PC-9 (cell line): ENCODE measurements at regions of chr17 and their contacts with region 1.

Region 1: DNA sequence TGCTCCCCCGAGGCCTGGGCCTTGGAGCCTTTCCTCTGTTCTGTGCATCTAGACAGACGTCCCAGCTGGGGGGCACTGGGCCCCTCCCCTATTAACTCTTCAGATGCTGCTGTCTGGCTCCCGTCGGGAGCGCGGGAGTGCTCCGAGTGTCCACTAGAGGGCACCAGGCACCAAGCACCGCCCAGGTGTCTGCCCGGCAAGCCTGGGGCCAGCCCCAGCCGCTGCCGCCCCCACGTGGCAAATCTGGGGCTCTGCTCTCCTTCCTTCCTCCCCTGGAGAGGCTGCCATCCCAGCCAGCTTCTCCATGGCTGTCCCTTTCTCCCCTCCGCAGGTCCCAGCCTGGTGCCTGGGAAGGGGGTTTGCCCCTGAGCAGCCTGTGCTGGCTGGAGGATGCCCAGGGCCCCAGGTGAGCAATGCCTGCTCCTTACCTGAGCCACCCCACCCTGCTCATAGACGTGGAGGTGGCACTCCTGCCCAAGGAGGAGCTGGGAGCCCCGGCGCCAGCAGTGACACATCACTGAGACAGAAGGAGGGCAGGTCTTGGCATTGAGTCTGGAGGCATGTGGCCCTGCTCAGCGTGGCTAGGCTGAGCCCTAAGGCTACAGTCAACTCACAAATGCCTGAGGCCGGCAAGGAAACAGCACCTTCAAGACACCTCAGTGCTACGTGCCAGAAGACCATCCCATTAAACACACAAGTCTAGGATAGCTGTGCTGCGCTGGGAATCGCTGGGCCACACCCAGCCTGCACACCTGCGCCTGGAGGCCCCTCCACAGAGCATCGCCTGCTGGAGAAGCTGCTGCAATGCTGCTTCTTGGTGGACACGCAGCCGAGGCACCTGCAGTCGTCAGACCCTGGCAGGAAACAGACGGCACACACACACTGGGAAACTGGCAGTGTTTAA is 19.7 kb downstream of the TMEM235 start:
- DNase-seq: peak; percentile 63 to 90
- H3K4me3 ChIP-seq: peak overlapping the region; percentile 23; the same call in 1 of the 2 replicates
- H3K27ac ChIP-seq: no peak overlapping the region
- H3K4me1 ChIP-seq: 0 out of 2 replicates have a peak, but pooled peaks cover 6% of the 10 kb centered on the region
- H3K27me3 ChIP-seq: no peaks in the 10 kb centered on the region
- CTCF ChIP-seq: peak; percentile 96

Region 2: DNA sequence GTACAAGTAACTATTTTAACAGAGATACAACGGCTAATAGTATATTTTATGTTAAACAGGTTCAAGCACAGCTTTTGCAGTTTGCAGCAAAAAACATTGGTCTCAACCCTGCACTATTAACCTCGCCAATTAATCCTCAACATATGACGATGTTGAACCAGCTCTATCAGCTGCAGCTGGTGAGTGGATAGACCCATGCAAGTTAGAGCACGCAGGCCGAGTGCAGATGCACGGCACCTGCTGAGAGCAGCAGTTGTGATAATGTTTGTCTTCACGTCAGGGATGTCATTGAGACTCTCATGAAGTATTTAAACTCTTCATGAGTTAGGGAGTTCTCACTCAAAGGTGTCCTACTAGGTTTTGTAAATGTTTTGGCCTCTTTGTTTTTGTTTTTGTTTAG is 168.2 kb before region 1 on chr17:
- CTCF ChIA-PET with region 1: interaction called, 15 read pairs
- POLR2A ChIA-PET with region 1: no interaction called
- intact Hi-C with region 1: loop called (anchors 1 kb)
- DNase-seq: no peak
- H3K4me3 ChIP-seq: no peak overlapping the region
- H3K27ac ChIP-seq: no peak overlapping the region
- H3K4me1 ChIP-seq: no peaks in the 10 kb centered on the region
- H3K27me3 ChIP-seq: peaks cover 10% of the 10 kb centered on the region
- CTCF ChIP-seq: no peak

Region 3: GRCh38 chr17:78095035-78095434 is 156.1 kb before region 1 on chr17:
- CTCF ChIA-PET with region 1: no interaction called
- POLR2A ChIA-PET with region 1: no interaction called
- intact Hi-C with region 1: no loop called
- DNase-seq: no peak
- H3K4me3 ChIP-seq: no peak overlapping the region
- H3K27ac ChIP-seq: no peak overlapping the region
- H3K4me1 ChIP-seq: no peaks in the 10 kb centered on the region
- H3K27me3 ChIP-seq: 0 out of 2 replicates have a peak, but pooled peaks cover 3% of the 10 kb centered on the region
- CTCF ChIP-seq: no peak

Region 4: GRCh38 chr17:78176548-78177025 is 74.6 kb before region 1 on chr17:
- CTCF ChIA-PET with region 1: interaction called, 17 read pairs
- POLR2A ChIA-PET with region 1: interaction called, 6 read pairs
- intact Hi-C with region 1: loop called (anchors 2 kb)
- DNase-seq: no peak
- H3K4me3 ChIP-seq: no peak overlapping the region
- H3K27ac ChIP-seq: no peak overlapping the region
- H3K4me1 ChIP-seq: 0 out of 2 replicates have a peak, but pooled peaks cover 4% of the 10 kb centered on the region
- H3K27me3 ChIP-seq: no peaks in the 10 kb centered on the region
- CTCF ChIP-seq: peak; percentile 50

Region 5: DNA sequence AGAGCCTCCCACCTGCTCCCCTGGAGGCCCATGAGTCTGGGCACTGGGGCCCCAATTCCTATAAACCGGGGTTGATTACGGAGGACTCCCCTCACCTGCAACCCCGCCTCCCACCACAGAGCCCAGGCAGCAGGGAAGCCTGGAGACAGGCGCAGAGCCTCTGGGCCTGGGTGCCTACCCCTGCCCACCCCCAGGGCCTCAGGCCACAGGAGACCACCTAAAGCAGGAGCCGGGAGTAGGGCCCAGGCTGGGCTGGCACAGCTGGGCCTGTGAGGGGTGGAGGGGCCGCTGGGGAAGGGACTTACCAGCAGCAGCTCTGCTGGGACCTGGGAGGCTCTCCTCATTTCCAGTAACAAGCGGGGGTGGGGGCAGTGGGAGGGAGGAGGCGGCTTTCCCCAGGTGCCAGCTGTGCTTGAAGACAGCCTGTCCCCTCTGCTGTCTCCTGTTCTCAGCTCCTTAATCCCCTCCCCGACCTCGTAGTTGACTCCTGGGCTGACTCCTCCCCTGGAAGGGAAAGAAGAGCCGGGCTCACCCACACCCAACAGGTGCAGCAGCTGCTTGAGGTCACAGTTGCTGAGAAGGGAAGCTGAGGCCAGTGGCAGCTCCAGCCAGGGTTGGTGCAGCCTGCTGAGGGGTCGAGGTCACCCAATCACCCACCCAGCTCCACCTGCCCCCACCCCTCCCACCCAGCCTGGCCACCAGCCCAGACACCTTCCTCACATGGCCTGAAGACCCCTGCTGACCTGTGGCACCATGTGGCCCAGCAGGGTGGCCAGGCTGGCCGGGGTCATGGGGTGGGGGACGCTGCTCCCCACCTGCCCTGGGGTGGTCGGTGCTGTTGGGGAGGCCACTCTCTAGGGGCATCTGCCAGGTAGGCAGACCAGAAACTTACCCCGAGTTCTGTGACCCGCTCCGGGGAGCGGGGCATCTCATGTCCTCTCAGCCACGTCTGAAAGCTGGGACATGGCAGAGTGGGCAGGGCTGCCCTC is 27.3 kb after region 1 on chr17:
- CTCF ChIA-PET with region 1: interaction called, 10 read pairs
- POLR2A ChIA-PET with region 1: no interaction called
- intact Hi-C with region 1: no loop called
- DNase-seq: no peak
- H3K4me3 ChIP-seq: no peak overlapping the region
- H3K27ac ChIP-seq: no peak overlapping the region
- H3K4me1 ChIP-seq: no peaks in the 10 kb centered on the region
- H3K27me3 ChIP-seq: no peaks in the 10 kb centered on the region
- CTCF ChIP-seq: no peak

Region 6: GRCh38 chr17:78360371-78361224 is 109.5 kb after region 1 on chr17:
- CTCF ChIA-PET with region 1: interaction called, 6 read pairs
- POLR2A ChIA-PET with region 1: no interaction called
- intact Hi-C with region 1: loop called (anchors 1 kb)
- DNase-seq: peak; percentile 59 to 95
- H3K4me3 ChIP-seq: peak overlapping the region; percentile 75
- H3K27ac ChIP-seq: peak overlapping the region; percentile 65
- H3K4me1 ChIP-seq: peaks cover 26% of the 10 kb centered on the region
- H3K27me3 ChIP-seq: no peaks in the 10 kb centered on the region
- CTCF ChIP-seq: peak; percentile 87

Region 7: GRCh38 chr17:78484300-78485246 is 233.4 kb after region 1 on chr17:
- CTCF ChIA-PET with region 1: no interaction called
- POLR2A ChIA-PET with region 1: interaction called, 3 read pairs
- intact Hi-C with region 1: loop called (anchors 1 kb)
- DNase-seq: peak in 1 of 2 experiments; percentile 71
- H3K4me3 ChIP-seq: peak overlapping the region; percentile 58
- H3K27ac ChIP-seq: no peak overlapping the region
- H3K4me1 ChIP-seq: no peaks in the 10 kb centered on the region
- H3K27me3 ChIP-seq: no peaks in the 10 kb centered on the region
- CTCF ChIP-seq: no peak